ENCODE measurements at regions of chr11 and their contacts with region 1.

Region 1: DNA sequence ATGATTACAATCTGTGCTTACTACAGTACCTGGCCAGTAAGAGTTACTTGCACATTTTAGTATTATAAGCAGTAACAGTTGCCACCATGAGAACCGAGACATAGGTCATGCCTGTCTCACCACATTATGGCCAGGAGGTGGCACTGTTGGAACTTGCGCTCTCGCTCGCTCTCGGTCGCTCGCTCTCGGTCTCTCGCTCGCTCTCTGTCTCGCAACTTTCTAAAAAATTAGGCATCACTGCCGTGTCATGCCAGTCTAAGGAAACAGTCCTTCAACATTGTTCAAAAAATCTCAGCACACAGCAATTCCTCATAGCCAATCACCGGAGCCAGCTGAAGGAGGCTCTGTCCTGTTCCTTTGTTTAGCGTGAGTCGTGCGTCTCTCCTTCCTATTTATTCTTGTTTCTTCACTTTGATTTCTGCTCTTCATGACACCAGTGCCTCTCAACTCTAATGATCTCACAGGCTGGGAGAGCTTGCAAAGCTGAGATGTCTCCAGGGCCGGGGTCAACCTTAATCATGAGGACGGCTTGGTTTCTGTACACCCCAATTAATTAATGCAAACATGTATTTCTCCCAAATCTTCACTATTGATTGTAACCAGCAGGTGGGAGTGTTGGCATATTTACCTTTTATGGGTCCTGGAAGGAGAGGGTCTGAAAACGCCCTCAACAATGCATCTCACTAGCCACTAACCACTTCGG is 6.3 kb upstream of the ADAMTS8 start:
- DNase-seq: peak; percentile 57 to 93 (median 86)

Region 2: GRCh38 chr11:130487924-130488815 is 53.5 kb after region 1 on chr11:
- intact Hi-C with region 1: no loop called
- DNase-seq: peak in 1 of 42 donors; percentile 15

Region 3: DNA sequence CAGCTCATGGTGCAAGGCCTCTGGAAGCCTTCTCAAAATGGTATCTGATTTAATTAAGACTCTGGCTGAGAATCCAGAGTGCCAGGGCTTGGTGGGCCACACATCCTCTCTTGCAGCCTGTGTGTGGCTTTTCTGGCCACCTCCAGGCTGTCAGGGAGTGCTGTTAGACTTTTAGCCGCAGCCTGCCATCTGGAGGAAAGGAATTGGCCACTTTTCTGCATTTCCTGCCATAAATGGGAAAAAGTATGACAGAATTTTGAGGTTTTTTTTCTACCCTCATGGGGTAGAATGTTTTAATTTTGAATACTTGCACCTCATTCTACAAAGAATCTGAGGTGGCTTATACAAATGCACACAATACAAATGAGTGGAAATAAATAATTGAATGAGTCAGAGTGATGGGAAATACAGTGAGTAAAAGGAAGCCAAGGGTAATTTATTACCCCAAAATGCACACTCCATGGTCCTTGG is 232.1 kb after region 1 on chr11:
- intact Hi-C with region 1: loop called (anchors 10 kb)
- DNase-seq: peak in 14 of 42 donors; percentile 13 to 55 (median 32)

Region 4: GRCh38 chr11:130861902-130862860 is 427.5 kb after region 1 on chr11:
- intact Hi-C with region 1: loop called (anchors 1 kb)
- DNase-seq: peak; percentile 84 to 98 (median 94)

Region 5: DNA sequence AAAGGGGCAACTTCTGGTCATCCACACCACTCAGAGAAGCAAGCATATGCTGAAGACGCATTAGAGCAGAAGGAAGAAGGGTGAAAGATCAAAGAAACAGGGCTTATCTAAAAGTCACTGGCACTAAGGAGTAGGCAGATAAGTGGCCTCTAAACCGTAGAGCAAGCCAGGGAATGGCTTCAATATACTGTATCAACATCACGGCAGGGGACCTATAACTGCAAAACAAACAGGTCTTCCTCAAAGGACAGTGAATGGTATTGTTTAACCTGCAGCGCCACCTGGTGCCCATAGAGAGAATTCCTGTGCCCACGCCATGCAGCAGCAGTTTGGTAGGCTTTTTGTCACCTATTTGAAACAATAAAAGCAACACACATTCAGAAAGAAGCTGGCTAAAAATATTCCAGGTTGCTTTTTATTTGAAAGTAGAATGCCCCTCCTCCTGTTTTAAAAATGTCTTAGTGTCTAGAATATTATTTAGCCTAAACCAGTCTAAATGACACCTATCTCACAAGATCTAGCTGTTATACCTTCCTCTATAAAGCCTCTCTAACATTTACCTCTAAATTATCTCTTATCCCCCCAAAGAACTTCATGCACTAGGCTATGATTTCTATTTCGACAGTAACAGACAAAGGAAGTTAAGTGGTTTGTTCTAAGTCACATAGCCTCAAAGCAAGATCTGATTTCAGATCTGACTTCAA is 459.8 kb after region 1 on chr11:
- intact Hi-C with region 1: loop called (anchors 10 kb)
- DNase-seq: peak; percentile 30 to 94 (median 84)

Measured in head of caudate nucleus (tissue), 42 donors.